Endothelial cell of umbilical vein (primary cell): ENCODE measurements at regions of chr9 and their contacts with region 1.

Region 1: GRCh38 chr9:98365227-98365669 is 109.8 kb upstream of the TBC1D2 start:
- DNase-seq: peak; percentile 85
- H3K4me3 ChIP-seq: no peak overlapping the region
- H3K27ac ChIP-seq: no peak overlapping the region
- H3K4me1 ChIP-seq: peaks cover 4% of the 10 kb centered on the region
- H3K27me3 ChIP-seq: no peaks in the 10 kb centered on the region
- CTCF ChIP-seq: peak; percentile 49 to 72
- POLR2A ChIP-seq: no peak

Region 2: DNA sequence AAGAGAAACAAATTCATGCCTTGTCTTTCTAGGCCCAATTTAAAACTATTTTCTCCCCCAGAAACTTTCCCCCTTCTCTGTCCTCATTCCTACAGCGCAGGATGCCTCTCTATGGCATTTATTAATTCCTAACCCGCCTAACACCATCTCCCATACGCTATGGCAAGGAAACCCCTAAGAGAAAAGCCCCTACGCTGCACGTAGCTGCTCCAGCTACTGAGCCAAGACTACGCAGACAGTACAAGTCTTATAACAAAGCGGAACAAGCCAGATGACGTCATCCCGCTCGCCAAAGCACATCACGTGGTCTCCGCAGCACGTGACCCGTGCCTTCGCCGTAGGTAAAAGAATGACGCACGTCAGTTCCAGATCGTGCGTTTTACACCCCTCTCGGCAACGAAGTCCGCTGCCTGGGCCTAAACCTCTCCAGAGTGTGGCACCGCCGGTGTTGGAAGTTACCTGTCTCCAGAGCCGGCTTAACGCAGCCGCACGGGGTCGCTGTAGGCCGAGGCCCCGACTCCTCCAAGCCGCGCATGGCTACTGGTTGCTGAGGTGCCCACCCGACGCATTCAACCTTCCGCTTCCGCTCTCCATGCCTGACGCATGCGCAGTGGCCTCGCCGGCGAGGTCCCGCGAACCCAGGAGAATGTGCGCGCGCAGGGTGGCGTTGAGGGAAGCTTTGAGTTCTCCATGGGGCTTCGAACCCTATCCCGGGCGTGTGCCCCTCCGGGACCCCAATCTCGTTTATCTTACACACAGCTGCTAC is 443.1 kb before region 1 on chr9 and contains the start of gene TRMO:
- CTCF ChIA-PET with region 1: no interaction called
- POLR2A ChIA-PET with region 1: no interaction called
- dilution Hi-C with region 1: no loop called
- intact Hi-C with region 1: no loop called
- DNase-seq: peak; percentile 98
- H3K4me3 ChIP-seq: peak within 1 kb of the TSS; percentile 15 to 71 (median 56)
- H3K27ac ChIP-seq: peak within 1 kb of the TSS; percentile 89
- H3K4me1 ChIP-seq: peaks cover 11% of the 10 kb centered on the region
- H3K27me3 ChIP-seq: peaks cover 8 to 22% of the 10 kb centered on the region in 2 experiments
- CTCF ChIP-seq: peak; percentile 61 to 76
- POLR2A ChIP-seq: peak; percentile 98
- total RNA-seq, gene TRMO: 10.1 and 10.9 TPM in 2 replicates

Region 3: DNA sequence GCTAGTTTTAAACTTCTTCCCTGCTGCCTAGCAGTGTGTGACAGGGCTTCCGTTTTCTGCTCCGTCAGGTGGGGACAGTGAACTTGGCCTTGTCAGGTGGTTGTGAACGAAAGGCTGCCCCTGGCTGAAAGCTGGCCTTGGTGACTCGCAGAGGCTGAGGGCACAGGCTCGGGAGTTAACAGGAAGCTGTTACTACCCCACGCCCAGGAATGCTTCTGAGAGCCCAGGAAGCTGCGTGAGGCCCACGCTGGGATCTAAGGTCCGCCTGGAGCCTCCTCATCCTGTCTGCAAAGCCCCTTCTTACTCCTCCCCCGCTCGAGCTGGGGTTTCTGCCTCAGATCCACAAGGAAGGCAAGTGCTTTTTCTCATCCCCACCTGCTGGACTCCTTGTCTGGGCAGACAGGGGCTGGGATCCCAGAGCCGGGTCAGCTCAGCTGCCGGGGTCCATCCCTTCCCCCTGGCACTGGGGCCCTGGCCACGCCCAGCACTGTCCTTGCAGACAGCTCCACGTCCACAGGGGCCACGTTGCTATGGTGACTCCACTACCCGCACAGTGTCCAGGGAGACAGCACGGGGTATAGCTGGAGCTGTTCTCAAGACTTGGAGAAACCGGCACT is 14.9 kb after region 1 on chr9:
- CTCF ChIA-PET with region 1: interaction called, 12 read pairs
- POLR2A ChIA-PET with region 1: no interaction called
- dilution Hi-C with region 1: no loop called
- intact Hi-C with region 1: no loop called
- DNase-seq: peak; percentile 8
- H3K4me3 ChIP-seq: no peak overlapping the region
- H3K27ac ChIP-seq: no peak overlapping the region
- H3K4me1 ChIP-seq: peaks cover 10% of the 10 kb centered on the region
- H3K27me3 ChIP-seq: no peaks in the 10 kb centered on the region
- CTCF ChIP-seq: no peak
- POLR2A ChIP-seq: no peak

Region 4: GRCh38 chr9:98391867-98392266 is 26.6 kb after region 1 on chr9:
- CTCF ChIA-PET with region 1: no interaction called
- POLR2A ChIA-PET with region 1: no interaction called
- dilution Hi-C with region 1: no loop called
- intact Hi-C with region 1: no loop called
- DNase-seq: peak; percentile 16
- H3K4me3 ChIP-seq: no peak overlapping the region
- H3K27ac ChIP-seq: no peak overlapping the region
- H3K4me1 ChIP-seq: peaks cover 5% of the 10 kb centered on the region
- H3K27me3 ChIP-seq: no peaks in the 10 kb centered on the region
- CTCF ChIP-seq: no peak
- POLR2A ChIP-seq: no peak